ENCODE measurements at regions of chr9 and their contacts with region 1.

Region 1: DNA sequence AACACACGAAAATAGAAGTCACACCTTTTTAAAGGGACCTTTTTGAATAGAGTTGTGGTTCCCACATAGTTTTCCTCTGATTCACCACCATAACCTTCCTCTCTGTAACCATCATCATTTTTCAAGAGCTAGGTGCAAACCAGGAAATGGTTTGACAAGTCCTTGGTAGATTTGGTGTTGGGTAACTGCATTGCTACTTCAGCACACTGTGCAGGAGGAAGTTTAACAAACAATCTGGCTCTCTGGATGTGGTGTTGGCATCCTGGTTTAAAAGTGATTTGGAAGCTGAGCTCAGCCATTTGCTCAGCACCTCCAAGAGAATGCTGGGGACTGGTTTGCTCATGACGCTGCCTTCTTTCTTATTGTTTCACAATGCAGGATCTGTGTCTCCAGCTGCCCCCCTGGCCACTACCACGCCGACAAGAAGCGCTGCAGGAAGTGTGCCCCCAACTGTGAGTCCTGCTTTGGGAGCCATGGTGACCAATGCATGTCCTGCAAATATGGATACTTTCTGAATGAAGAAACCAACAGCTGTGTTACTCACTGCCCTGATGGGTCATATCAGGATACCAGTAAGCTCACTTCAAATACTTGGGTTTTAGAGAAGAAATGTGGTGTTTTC is 213.1 kb downstream of the RFK start:
- DNase-seq: peak in 1 of 2 donors; percentile 62
- H3K4me3 ChIP-seq: no peak overlapping the region
- H3K27ac ChIP-seq: peak overlapping the region in 4 of 5 donors; percentile 0 to 63 (median 54)
- H3K4me1 ChIP-seq: peaks cover 3 to 15% (median 10%) of the 10 kb centered on the region in 4 donors
- H3K27me3 ChIP-seq: no peaks in the 10 kb centered on the region
- CTCF ChIP-seq: no peak
- EP300 ChIP-seq: no peak
- POLR2A ChIP-seq: no peak

Region 2: DNA sequence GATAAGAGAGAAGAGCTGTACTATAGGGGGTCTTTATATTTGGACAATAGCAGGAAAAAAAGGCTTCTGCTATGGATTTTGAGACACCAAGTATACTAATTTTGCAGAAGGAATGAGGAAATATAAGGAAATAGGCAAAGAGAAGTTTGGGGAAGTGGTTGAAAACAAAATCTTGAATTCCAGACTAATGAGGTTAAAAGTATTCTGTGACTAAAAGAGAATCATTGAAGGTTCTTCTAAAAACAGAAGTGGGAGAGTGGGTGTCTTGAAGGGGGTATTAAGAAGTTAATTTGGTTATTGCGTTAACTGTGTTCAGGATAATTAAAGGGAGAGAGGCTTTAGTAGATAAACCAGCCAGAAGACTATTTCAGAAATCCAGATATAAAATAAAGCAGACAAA is 64.4 kb after region 1 on chr9:
- intact Hi-C with region 1: loop called (anchors 10 kb)
- DNase-seq: no peak
- H3K4me3 ChIP-seq: no peak overlapping the region
- H3K27ac ChIP-seq: no peak overlapping the region
- H3K4me1 ChIP-seq: no peaks in the 10 kb centered on the region
- H3K27me3 ChIP-seq: no peaks in the 10 kb centered on the region
- CTCF ChIP-seq: no peak
- EP300 ChIP-seq: no peak
- POLR2A ChIP-seq: no peak

Measured in stomach (tissue), 19 donors.